Adrenal gland (tissue), 19 donors: ENCODE measurements at regions of chr6 and their contacts with region 1.

Region 1: DNA sequence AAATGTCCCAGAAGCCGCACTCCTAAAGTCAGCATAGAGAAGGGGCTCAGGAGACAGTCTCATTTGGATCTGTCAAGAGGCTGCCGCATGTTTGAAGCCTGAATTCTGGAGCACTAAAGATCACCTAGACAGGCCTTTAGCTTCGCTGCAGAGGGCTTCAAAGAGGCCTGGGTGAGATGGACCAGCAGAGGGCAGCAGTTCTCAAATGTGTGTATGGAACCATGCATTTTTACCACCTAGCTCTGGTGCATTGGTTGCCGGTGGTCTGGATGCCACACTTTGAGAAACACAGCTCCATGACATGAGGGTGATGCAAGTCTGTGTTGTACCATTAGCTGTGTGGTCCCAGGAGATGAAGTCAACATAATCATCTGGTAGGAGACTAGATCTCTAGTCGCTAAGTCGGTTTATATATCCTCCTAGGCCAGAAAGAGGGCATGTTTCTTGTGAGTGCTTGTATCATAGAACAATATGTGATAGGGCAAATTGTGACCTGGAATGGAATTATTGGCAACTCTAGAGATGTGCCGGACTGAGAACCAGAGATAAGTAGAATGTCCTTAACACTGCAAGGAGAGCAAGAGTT is 64.8 kb downstream of the KIAA0319 start:
- DNase-seq: peak; percentile 50 to 90 (median 72)
- H3K4me3 ChIP-seq: no peak overlapping the region
- H3K27ac ChIP-seq: no peak overlapping the region
- H3K4me1 ChIP-seq: peaks cover 0 to 12% of the 10 kb centered on the region in 2 donors
- H3K27me3 ChIP-seq: peaks cover 4% of the 10 kb centered on the region
- CTCF ChIP-seq: peak; percentile 54 to 78 (median 70)
- POLR2A ChIP-seq: no peak

Region 2: DNA sequence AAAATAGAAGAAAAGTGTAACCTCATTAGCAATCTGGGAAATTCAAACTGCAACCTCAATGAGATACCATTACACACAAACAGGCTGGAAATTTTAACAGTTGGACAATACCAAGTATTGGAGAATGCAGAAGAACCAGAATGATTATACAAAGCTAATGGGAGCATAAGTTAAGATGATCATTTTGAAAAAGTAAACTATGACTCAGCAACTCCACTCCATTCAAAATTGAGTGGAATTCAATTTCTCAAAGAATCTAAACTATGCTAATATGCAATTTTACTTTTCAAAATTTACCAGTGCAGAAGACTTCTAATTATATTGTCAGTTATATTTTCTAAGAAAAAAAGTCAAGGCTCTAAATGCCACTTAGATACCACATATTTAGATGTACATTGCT is 109.0 kb before region 1 on chr6:
- intact Hi-C with region 1: no loop called
- DNase-seq: no peak
- H3K4me3 ChIP-seq: no peak overlapping the region
- H3K27ac ChIP-seq: no peak overlapping the region
- H3K4me1 ChIP-seq: no peaks in the 10 kb centered on the region
- H3K27me3 ChIP-seq: no peaks in the 10 kb centered on the region
- CTCF ChIP-seq: no peak
- POLR2A ChIP-seq: no peak

Region 3: DNA sequence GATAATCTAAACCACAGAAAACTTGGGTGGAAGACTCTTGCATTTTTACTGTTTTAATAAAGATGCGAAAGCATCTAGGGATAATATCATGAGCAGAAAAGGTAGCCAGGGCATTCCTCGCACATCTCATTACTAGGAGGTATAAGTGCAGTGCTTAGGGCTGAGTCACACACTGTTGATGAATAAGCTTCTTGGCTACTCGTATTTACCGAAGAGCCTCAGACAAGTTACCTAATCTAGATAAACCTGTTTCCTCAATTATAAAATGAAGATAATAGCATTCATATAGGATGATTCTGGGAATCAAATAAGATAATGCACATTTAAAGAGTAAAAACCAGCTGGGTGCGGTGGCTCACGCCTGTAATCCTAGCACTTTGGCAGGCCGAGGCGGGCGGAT is 65.6 kb after region 1 on chr6:
- intact Hi-C with region 1: loop called in 1 of 2 experiments (anchors 10 kb)
- DNase-seq: no peak
- H3K4me3 ChIP-seq: no peak overlapping the region
- H3K27ac ChIP-seq: no peak overlapping the region
- H3K4me1 ChIP-seq: no peaks in the 10 kb centered on the region
- H3K27me3 ChIP-seq: peaks cover 8% of the 10 kb centered on the region
- CTCF ChIP-seq: no peak
- POLR2A ChIP-seq: no peak

Region 4: GRCh38 chr6:24689964-24690363 is 108.8 kb after region 1 on chr6:
- intact Hi-C with region 1: loop called (anchors 5 kb)
- DNase-seq: no peak
- H3K4me3 ChIP-seq: no peak overlapping the region
- H3K27ac ChIP-seq: no peak overlapping the region
- H3K4me1 ChIP-seq: peaks cover 0 to 5% of the 10 kb centered on the region in 2 donors
- H3K27me3 ChIP-seq: no peaks in the 10 kb centered on the region
- CTCF ChIP-seq: no peak
- POLR2A ChIP-seq: no peak

Region 5: DNA sequence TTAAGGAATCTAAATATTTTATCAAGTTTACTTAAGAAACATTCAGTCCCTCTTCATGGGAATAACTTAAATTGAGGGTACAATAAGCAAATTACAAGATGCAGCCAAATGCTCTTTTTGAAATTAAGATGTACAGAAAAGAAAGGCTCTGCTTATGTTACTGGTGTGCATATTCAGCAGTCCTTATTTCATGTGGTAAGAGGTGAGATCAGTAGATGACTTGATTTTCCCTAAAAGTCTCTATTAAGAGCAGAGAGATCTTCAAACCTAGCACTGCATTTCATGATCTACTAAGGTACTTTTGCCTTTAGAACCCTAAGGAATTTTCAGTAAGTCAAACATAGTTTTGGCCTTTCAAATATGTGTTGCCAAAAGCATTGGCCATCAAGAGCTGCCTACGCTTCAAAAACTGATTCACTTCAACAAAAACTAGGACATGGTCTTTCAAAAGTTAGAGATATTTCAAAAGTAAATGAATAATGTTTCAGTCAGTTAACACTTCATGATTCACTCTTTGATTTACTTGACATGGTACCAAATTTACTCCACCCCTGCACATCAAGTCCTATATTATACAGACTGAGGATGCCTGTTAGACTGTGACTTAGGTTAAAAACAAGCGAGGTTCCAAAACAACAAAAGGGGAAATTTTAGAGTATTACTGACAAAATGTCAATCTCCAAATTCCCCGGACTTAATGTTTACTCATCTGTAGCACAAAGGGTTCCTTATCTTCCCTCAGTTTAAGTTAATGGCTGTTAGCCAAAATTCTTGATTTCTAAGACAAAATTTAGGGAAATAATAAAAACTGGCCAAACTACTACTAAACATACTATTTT is 118.6 kb after region 1 on chr6:
- intact Hi-C with region 1: loop called (anchors 5 kb)
- DNase-seq: no peak
- H3K4me3 ChIP-seq: no peak overlapping the region
- H3K27ac ChIP-seq: peak overlapping the region in 1 of 5 donors; percentile 40
- H3K4me1 ChIP-seq: peaks cover 0 to 7% of the 10 kb centered on the region in 2 donors
- H3K27me3 ChIP-seq: no peaks in the 10 kb centered on the region
- CTCF ChIP-seq: no peak
- POLR2A ChIP-seq: no peak